Ascending aorta (tissue), 2 donors: ENCODE measurements at regions of chr3 and their contacts with region 1.

Region 1: GRCh38 chr3:72907731-72908620 is 20.1 kb downstream of the GXYLT2 start:
- DNase-seq: peak; percentile 33 to 91
- H3K4me3 ChIP-seq: peak overlapping the region in 1 of 2 donors; percentile 34
- H3K27ac ChIP-seq: peak overlapping the region; percentile 80 to 84
- H3K4me1 ChIP-seq: peaks cover 13 to 59% of the 10 kb centered on the region in 2 donors
- H3K27me3 ChIP-seq: no peaks in the 10 kb centered on the region
- CTCF ChIP-seq: no peak

Region 2: DNA sequence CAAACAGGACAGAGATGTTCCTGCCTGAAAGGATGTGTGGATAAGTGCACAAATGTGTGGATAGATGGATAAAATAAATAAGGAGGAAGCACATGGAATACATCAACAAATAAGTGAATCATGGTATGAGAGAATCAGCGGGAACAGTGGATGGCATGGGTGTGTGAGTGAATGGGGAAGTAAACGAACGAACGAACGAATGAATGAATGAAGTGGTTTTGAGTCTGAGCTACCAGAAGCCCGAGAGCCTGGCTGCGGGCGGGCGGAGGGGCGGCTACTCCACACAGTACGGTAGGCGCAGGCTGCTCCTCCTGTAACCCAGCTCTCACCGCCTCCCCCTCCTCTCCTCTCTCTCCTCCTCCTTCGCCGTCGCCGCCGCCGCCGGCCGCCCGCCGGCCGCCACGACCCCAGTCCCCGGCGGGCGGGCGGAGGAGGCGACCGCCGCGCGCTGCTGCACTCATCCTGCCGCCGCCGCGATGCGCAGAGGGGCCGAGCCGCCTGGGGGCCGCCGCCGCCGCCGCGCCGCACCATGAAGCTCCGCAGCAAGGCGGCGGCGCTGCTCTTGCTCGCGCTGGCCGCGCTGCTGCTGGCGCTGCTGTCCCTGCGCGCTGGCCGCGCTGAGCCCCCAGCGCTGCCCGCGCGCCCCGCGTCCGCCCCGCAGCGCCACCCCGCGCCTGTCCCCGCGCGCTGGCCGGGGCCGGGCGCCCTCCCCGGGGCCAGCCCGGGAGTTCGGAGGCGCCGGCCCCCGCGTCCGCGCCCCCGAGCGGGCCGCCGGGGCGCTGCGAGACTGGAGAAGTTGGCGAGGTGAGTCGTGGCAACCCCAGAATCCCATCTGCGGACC is 20.1 kb before region 1 on chr3 and contains the start of gene GXYLT2:
- intact Hi-C with region 1: loop called (anchors 1 kb)
- DNase-seq: peak in 1 of 2 donors; percentile 78
- H3K4me3 ChIP-seq: peak within 1 kb of the TSS; percentile 54 to 80
- H3K27ac ChIP-seq: peak within 1 kb of the TSS; percentile 60 to 89
- H3K4me1 ChIP-seq: peaks cover 3% of the 10 kb centered on the region in 2 donors
- H3K27me3 ChIP-seq: no peaks in the 10 kb centered on the region
- CTCF ChIP-seq: peak in 2 of 3 experiments; percentile 3 to 29
- total RNA-seq, gene GXYLT2: 19.5 TPM

Region 3: DNA sequence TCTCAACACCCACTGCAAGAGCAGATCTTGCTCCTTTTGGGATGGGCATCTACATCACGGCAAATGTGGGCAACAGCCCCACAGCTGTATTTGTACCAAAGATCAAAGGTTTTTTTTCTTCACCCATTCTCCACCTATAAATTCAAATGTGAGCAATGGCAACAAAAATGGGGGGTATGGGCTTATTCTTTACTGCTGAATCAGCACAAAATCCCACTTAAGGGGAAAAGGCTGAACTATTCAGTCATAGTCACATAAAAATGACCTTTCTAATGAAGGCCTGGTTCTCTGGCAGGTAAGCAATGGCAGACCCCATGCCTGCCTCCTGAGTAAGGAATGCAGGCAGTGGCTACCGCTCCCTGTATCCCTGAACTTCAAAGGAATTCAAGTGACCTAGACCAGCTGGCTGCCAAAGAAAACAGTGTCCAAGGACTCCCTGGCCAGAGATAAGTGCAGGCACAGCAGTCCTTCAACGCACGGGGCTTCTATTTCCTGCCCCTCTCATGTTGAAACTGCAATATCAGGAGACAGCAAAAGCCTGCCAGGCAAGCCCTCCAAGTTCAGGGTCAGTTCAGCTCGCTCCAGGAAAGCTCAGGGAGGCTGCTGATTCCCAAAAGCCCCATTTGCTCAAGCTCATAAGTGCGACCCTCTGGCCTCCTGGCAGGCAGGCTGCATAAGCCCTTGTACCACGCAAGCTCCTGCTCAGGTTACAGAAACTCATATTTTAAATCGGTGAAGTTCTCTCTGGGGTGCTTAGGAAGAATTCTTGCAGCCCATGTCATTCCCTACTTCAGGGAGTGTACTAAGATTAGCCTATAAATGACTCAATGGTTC is 582.7 kb after region 1 on chr3:
- intact Hi-C with region 1: no loop called
- DNase-seq: no peak
- H3K4me3 ChIP-seq: no peak overlapping the region
- H3K27ac ChIP-seq: peak overlapping the region in 1 of 2 donors; percentile 12
- H3K4me1 ChIP-seq: peaks cover 4 to 57% of the 10 kb centered on the region in 2 donors
- H3K27me3 ChIP-seq: no peaks in the 10 kb centered on the region
- CTCF ChIP-seq: no peak